Stomach (tissue), 19 donors: ENCODE measurements at regions of chr5 and their contacts with region 1.

Region 1: DNA sequence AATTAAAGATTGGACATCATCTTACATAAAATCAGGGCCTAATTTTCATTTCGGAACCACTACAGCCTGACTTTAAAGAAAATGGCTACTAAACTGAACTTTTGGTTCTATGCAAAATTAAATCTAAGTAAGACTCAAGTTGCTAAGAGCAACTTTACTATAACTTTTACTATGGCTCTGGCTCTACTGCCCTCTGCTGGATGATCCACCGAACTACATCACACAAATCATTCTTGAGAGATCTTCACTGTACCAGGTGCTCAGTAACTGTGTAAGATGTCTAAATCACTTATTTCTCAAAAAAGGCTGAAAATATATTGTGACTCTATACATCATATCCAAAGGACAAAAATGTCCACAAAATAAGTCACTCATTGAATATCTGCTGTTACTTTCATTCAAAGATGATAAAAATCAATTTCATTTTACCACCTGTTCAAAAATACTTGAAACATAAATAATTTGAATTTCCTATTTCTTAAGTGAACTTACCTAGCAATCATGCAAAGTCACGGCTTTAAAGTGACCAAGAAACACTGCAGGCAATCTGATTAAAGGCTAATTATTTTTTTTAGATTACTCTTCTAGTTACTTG is 13.5 kb downstream of the MOCS2 start:
- DNase-seq: peak; percentile 68 to 83
- H3K4me3 ChIP-seq: no peak overlapping the region
- H3K27ac ChIP-seq: no peak overlapping the region
- H3K4me1 ChIP-seq: peaks cover 0 to 11% (median 0%) of the 10 kb centered on the region in 4 donors
- H3K27me3 ChIP-seq: no peaks in the 10 kb centered on the region
- CTCF ChIP-seq: peak in 5 of 7 experiments; percentile 57 to 88 (median 84)
- EP300 ChIP-seq: no peak
- POLR2A ChIP-seq: no peak

Region 2: GRCh38 chr5:52811067-52811749 is 284.8 kb before region 1 on chr5:
- intact Hi-C with region 1: no loop called
- DNase-seq: no peak
- H3K4me3 ChIP-seq: no peak overlapping the region
- H3K27ac ChIP-seq: peak overlapping the region in 2 of 5 donors; percentile 13 to 79
- H3K4me1 ChIP-seq: peaks cover 0 to 90% (median 46%) of the 10 kb centered on the region in 4 donors
- H3K27me3 ChIP-seq: no peaks in the 10 kb centered on the region
- CTCF ChIP-seq: no peak
- EP300 ChIP-seq: no peak
- POLR2A ChIP-seq: no peak

Region 3: GRCh38 chr5:52950686-52951085 is 145.3 kb before region 1 on chr5:
- intact Hi-C with region 1: loop called (anchors 5 kb)
- DNase-seq: no peak
- H3K4me3 ChIP-seq: no peak overlapping the region
- H3K27ac ChIP-seq: no peak overlapping the region
- H3K4me1 ChIP-seq: peaks cover 0 to 39% (median 25%) of the 10 kb centered on the region in 4 donors
- H3K27me3 ChIP-seq: no peaks in the 10 kb centered on the region
- CTCF ChIP-seq: no peak
- EP300 ChIP-seq: no peak
- POLR2A ChIP-seq: no peak

Region 4: GRCh38 chr5:54115735-54116403 is 1019.8 kb after region 1 on chr5:
- intact Hi-C with region 1: no loop called
- DNase-seq: no peak
- H3K4me3 ChIP-seq: no peak overlapping the region
- H3K27ac ChIP-seq: no peak overlapping the region
- H3K4me1 ChIP-seq: no peaks in the 10 kb centered on the region
- H3K27me3 ChIP-seq: no peaks in the 10 kb centered on the region
- CTCF ChIP-seq: no peak
- EP300 ChIP-seq: no peak
- POLR2A ChIP-seq: no peak